Mammary epithelial cell (primary cell): ENCODE measurements at regions of chr11 and their contacts with region 1.

Region 1: GRCh38 chr11:83724008-83724461 is 437.9 kb upstream of the CCDC90B start:
- DNase-seq: peak; percentile 41
- H3K4me3 ChIP-seq: peak overlapping the region; percentile 30 to 55 (median 52)
- H3K27ac ChIP-seq: no peak overlapping the region
- H3K4me1 ChIP-seq: peaks cover 5% of the 10 kb centered on the region
- H3K27me3 ChIP-seq: no peaks in the 10 kb centered on the region
- CTCF ChIP-seq: peak; percentile 38 to 61

Region 2: GRCh38 chr11:83241291-83241946 is 482.6 kb before region 1 on chr11:
- CTCF ChIA-PET with region 1: no interaction called
- dilution Hi-C with region 1: no loop called
- in situ Hi-C with region 1: no loop called
- intact Hi-C with region 1: loop called (anchors 5 kb)
- DNase-seq: peak; percentile 59
- H3K4me3 ChIP-seq: no peak overlapping the region
- H3K27ac ChIP-seq: no peak overlapping the region
- H3K4me1 ChIP-seq: no peaks in the 10 kb centered on the region
- H3K27me3 ChIP-seq: no peaks in the 10 kb centered on the region
- CTCF ChIP-seq: peak; percentile 65 to 74

Region 3: GRCh38 chr11:83292709-83293456 is 431.2 kb before region 1 on chr11:
- CTCF ChIA-PET with region 1: interaction called, 17 read pairs
- dilution Hi-C with region 1: no loop called
- in situ Hi-C with region 1: no loop called
- intact Hi-C with region 1: loop called (anchors 1 kb)
- DNase-seq: peak; percentile 50
- H3K4me3 ChIP-seq: no peak overlapping the region
- H3K27ac ChIP-seq: no peak overlapping the region
- H3K4me1 ChIP-seq: no peaks in the 10 kb centered on the region
- H3K27me3 ChIP-seq: no peaks in the 10 kb centered on the region
- CTCF ChIP-seq: peak; percentile 70 to 76

Region 4: GRCh38 chr11:83306200-83307080 is 417.6 kb before region 1 on chr11:
- CTCF ChIA-PET with region 1: interaction called, 3 read pairs
- dilution Hi-C with region 1: no loop called
- in situ Hi-C with region 1: no loop called
- intact Hi-C with region 1: loop called (anchors 5 kb)
- DNase-seq: no peak
- H3K4me3 ChIP-seq: no peak overlapping the region
- H3K27ac ChIP-seq: no peak overlapping the region
- H3K4me1 ChIP-seq: no peaks in the 10 kb centered on the region
- H3K27me3 ChIP-seq: no peaks in the 10 kb centered on the region
- CTCF ChIP-seq: peak in 1 of 2 donors; percentile 8

Region 5: DNA sequence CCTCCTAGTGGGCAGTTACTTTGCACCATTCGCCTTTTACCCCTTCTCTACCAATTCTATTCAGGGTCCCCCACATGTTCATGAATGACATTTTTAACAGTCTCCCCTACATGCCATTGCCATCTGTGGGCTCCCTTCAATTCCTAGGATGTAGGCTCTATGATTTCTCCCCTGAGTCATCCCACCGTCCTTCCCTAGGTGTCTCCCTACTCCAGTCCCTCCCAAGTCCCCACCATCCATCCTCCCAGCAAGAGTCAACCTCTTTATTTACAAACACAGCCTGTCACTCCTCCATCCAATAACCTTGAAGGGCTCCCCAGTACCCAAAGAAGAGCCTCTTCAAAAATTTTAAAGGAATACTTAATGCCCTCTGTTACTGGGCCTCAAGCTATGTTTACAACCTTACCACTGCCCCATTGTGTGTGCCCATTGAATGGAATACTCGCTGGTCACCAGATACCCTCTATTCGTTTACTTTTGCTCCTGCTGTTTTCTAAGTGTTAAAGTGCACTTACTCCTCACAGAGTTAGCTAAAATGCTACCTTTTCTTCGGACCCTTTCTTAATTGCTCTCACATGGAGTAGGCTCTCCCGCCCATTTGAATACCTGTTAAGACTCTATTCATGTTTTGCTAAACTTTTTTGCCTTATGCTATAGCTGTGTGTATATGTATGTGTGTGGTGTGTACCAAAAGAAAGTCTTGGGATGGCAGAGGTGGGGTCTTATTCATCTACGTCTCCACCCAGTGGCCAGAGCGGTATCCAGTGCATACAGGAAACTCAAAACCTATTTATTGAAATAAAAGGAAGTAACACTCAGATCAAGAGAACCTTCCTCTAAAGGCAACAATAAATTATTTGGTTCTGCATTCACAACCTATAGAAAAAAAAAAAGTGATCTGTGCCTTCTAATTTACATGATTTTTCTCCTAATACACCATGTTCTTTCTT is 202.1 kb before region 1 on chr11:
- CTCF ChIA-PET with region 1: interaction called, 6 read pairs
- dilution Hi-C with region 1: no loop called
- in situ Hi-C with region 1: no loop called
- intact Hi-C with region 1: loop called (anchors 2 kb)
- DNase-seq: no peak
- H3K4me3 ChIP-seq: no peak overlapping the region
- H3K27ac ChIP-seq: no peak overlapping the region
- H3K4me1 ChIP-seq: no peaks in the 10 kb centered on the region
- H3K27me3 ChIP-seq: peaks cover 2% of the 10 kb centered on the region
- CTCF ChIP-seq: peak in 1 of 2 donors; percentile 54